Dendritic cell treated with granulocyte-macrophage colony-stimulating factor and Interleukin-4, amounts not matched to agents 40 ng/mL and 50 ng/mL, for 4 days (primary cell): ENCODE measurements at regions of chr16 and their contacts with region 1.

Region 1: GRCh38 chr16:48462201-48462600 is 77.0 kb upstream of the SIAH1 start:
- H3K4me3 Mint-ChIP-seq: no peak overlapping the region
- H3K27ac Mint-ChIP-seq: no peak overlapping the region
- H3K4me1 Mint-ChIP-seq: peaks cover 45% of the 10 kb centered on the region
- H3K27me3 Mint-ChIP-seq: peaks cover 2% of the 10 kb centered on the region

Region 2: DNA sequence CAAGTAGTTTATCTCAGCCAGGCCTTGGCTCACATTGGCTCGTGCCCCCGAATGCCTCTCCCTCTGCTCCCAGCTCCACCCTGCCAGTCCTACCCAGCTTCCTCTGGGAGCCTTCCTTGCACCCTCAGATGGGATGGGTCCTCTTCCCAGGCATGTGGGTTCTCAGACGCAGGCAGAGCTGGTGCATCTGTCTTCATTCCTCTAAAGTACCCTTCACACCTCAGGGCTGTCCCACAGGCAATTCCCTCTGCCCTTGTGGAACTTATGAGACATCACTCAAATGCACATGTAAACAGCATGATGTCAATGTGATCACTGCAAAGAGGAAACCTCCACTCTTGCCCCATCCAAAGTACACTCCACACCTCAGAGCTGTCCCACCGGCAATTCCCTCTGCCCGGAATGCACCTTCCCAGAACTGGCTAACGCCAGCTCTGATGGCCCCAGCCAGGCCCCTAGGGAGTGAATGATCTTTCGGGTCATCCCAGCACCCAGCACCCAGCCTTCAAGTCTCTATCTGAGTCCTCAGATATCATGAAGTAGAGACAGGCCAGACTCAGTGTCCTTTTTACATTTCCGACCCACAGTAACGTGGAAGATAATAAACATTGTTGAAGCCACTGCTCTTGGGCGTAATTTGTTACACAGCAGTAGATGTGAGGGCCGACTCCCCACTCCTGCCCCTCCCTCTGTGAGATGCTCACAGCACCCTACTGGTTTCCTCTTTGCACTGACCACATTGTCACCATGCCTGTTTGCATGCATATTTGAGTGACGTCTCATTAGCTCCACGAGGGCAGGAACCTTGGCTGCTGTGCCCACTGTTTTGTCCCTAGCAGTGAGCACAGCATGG is 62.4 kb after region 1 on chr16:
- intact Hi-C with region 1: loop called (anchors 5 kb)
- H3K4me3 Mint-ChIP-seq: no peak overlapping the region
- H3K27ac Mint-ChIP-seq: peak overlapping the region; percentile 56
- H3K4me1 Mint-ChIP-seq: peaks cover 19% of the 10 kb centered on the region
- H3K27me3 Mint-ChIP-seq: no peaks in the 10 kb centered on the region